ENCODE measurements at regions of chr10 and their contacts with region 1.

Region 1: DNA sequence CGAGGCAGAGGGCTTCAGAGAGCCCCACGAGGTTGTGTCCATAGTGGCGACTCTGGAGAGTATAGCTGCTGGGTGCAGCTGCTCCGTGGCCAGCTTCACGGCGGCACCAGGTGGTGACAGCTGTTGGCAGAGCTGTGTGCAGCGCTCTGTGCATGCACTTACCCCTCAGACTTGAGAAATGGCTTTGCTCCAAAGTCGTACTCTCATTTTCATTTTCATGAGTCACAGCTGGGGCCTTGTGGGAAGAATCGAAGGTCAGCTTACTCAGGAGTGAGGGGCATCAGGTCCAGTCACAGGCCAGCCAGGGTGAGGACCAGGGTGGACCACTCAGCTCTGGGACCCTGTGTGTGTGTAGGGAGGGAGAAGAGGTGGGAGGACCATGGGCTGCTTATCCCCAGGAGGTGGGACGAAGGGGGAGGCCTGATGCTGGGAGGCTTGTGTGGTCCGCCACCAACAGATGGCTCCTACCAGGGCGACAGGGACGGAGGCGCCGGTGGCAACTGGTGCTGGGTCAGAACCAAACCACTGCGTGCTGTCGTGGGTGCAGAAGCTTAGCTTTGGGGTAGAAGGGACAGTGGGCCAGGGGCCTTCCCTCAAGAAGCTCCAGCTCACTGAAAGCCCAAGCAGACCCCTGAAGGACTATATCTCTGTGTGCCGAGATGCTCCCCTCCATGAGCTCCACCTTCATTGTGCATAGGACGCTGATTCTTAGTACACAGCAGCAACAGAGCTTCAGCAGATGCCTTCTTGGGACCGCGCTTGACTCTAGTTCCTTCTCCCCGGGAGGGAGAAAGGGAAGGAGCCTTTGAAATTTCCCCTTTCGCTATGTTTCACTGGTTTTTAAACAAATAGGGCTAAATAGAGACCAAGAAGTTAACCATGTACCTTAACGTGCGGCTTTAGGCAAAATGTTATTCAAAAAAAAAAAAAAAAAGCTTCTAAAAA is 225.0 kb downstream of the CELF2 start:
- DNase-seq: peak; percentile 54
- ATAC-seq: peak; percentile 59
- H3K4me3 Mint-ChIP-seq: peak overlapping the region; percentile 88
- H3K27ac Mint-ChIP-seq: no peak overlapping the region
- H3K4me1 Mint-ChIP-seq: peaks cover 8% of the 10 kb centered on the region
- H3K27me3 Mint-ChIP-seq: no peaks in the 10 kb centered on the region
- CTCF ChIP-seq: no peak

Region 2: DNA sequence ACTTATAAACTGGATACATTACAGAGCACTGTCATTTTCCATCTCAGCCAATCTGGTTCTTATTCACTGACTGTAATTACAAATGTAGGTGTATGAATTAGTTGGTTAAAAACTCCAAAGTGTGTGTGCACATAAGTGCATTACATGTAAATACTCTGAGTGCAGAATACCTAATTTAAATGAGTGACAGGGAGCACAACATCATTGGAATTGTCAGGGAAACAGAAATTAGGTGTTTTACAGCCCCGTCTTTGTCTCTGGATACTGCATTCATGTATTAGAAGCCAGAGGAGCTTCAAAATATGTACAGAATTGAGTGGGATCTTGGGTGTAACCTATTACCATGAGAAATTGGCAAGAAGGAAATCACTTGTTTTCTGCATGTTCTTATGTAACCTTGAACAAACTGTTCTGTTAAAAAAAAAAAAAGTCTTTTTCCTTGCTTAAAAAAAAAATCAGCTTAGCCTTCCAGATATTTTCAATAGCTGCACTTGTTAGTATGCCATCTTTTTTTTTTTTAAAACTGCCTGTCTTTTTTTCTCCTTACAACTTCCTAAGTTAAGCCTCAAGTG is 193.9 kb before region 1 on chr10:
- CTCF ChIA-PET with region 1: no interaction called
- POLR2A ChIA-PET with region 1: no interaction called
- intact Hi-C with region 1: no loop called
- DNase-seq: no peak
- ATAC-seq: no peak
- H3K4me3 Mint-ChIP-seq: no peak overlapping the region
- H3K27ac Mint-ChIP-seq: no peak overlapping the region
- H3K4me1 Mint-ChIP-seq: no peaks in the 10 kb centered on the region
- H3K27me3 Mint-ChIP-seq: peaks cover 12% of the 10 kb centered on the region
- CTCF ChIP-seq: no peak

Region 3: DNA sequence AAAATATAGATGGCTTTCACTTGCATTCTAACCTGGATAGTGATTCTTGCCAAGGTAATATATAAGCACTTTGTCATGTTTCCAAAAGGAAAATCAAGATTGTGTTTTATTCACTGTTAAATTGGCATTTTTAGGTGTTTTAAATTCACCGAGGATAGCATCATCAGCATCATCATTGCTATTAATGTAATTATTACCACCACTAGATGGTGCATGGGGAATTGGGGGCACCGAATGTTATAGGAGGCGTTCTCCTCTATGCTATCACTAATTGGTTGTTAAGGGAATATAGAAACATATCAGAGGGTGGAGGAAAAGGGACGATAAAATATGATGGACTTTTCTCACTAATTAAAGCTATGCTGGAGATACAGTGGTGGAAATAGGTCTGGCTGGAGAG is 129.6 kb before region 1 on chr10:
- CTCF ChIA-PET with region 1: interaction called, 6 read pairs
- POLR2A ChIA-PET with region 1: interaction called, 3 read pairs
- intact Hi-C with region 1: loop called (anchors 1 kb)
- DNase-seq: no peak
- ATAC-seq: peak; percentile 73
- H3K4me3 Mint-ChIP-seq: no peak overlapping the region
- H3K27ac Mint-ChIP-seq: no peak overlapping the region
- H3K4me1 Mint-ChIP-seq: peaks cover 9% of the 10 kb centered on the region
- H3K27me3 Mint-ChIP-seq: no peaks in the 10 kb centered on the region
- CTCF ChIP-seq: no peak

Region 4: DNA sequence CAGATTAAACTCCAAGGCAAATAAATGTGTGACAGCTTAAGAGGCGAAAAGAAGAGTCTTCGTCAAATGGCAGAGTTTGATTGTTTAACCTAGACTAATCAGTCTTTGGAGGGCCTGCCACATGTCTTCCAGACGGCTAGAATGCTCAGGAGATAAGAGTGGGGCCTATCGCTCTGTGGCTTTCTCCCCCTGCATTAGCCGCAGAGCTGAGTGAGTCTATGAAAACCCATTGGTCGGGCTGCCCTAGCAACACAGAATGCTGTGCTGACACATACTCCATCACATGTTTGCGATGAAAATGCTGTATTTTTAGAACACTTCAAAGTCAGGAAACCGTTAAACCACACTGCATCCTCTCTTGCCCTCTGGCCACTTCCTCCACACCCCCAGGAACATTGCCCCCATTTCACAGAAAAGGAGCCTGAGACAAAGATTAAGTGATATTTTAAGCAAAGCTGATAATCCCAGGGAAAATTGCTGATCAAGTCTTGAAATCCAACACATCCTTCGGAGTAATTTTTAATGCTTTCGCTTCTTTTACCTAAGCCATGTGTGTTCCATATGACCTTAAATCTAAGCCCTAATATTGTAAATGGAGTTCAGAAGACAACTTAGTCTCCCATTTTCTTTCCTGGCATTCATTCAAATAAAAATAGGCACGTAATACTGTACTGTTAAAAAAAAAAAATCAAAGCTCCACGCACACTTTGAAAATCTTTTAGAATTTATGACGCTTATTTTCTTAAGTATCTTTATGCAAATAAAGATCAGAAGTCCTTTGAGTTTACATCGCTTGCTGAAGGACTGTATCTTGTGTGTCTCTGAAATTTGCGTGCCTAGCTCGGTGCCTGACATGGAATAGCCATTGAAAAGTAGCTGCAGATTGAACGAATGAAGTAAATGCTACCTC is 63.9 kb before region 1 on chr10:
- CTCF ChIA-PET with region 1: interaction called, 12 read pairs
- POLR2A ChIA-PET with region 1: interaction called, 29 read pairs
- intact Hi-C with region 1: loop called (anchors 1 kb)
- DNase-seq: peak; percentile 43
- ATAC-seq: peak; percentile 75
- H3K4me3 Mint-ChIP-seq: peak overlapping the region; percentile 80
- H3K27ac Mint-ChIP-seq: peak overlapping the region; percentile 94
- H3K4me1 Mint-ChIP-seq: peaks cover 30% of the 10 kb centered on the region
- H3K27me3 Mint-ChIP-seq: no peaks in the 10 kb centered on the region
- CTCF ChIP-seq: no peak

Region 5: GRCh38 chr10:11209830-11210181 is 32.9 kb before region 1 on chr10:
- CTCF ChIA-PET with region 1: interaction called, 4 read pairs
- POLR2A ChIA-PET with region 1: interaction called, 14 read pairs
- intact Hi-C with region 1: loop called (anchors 1 kb)
- DNase-seq: no peak
- ATAC-seq: peak; percentile 30
- H3K4me3 Mint-ChIP-seq: peak overlapping the region; percentile 78
- H3K27ac Mint-ChIP-seq: peak overlapping the region; percentile 92
- H3K4me1 Mint-ChIP-seq: peaks cover 96% of the 10 kb centered on the region
- H3K27me3 Mint-ChIP-seq: no peaks in the 10 kb centered on the region
- CTCF ChIP-seq: no peak

Region 6: GRCh38 chr10:11255796-11256444 is 13.2 kb after region 1 on chr10:
- CTCF ChIA-PET with region 1: interaction called, 7 read pairs
- POLR2A ChIA-PET with region 1: interaction called, 15 read pairs
- intact Hi-C with region 1: loop called (anchors 1 kb)
- DNase-seq: no peak
- ATAC-seq: peak; percentile 76
- H3K4me3 Mint-ChIP-seq: no peak overlapping the region
- H3K27ac Mint-ChIP-seq: peak overlapping the region; percentile 84
- H3K4me1 Mint-ChIP-seq: peaks cover 77% of the 10 kb centered on the region
- H3K27me3 Mint-ChIP-seq: no peaks in the 10 kb centered on the region
- CTCF ChIP-seq: no peak

Region 7: GRCh38 chr10:11488126-11488525 is 245.4 kb after region 1 on chr10:
- CTCF ChIA-PET with region 1: no interaction called
- POLR2A ChIA-PET with region 1: no interaction called
- intact Hi-C with region 1: no loop called
- DNase-seq: no peak
- ATAC-seq: no peak
- H3K4me3 Mint-ChIP-seq: no peak overlapping the region
- H3K27ac Mint-ChIP-seq: no peak overlapping the region
- H3K4me1 Mint-ChIP-seq: peaks cover 16% of the 10 kb centered on the region
- H3K27me3 Mint-ChIP-seq: no peaks in the 10 kb centered on the region
- CTCF ChIP-seq: no peak